Sciatic nerve (tissue), 2 donors: ENCODE measurements at regions of chr3 and their contacts with region 1.

Region 1: GRCh38 chr3:35659768-35660167 is 20.4 kb downstream of the ARPP21 start:
- DNase-seq: no peak
- ATAC-seq: no peak

Region 2: GRCh38 chr3:35635407-35635806 is 24.4 kb before region 1 on chr3:
- intact Hi-C with region 1: loop called (anchors 1 kb)
- DNase-seq: no peak
- ATAC-seq: no peak